Left cardiac atrium (tissue), 4 donors: ENCODE measurements at regions of chr11 and their contacts with region 1.

Region 1: DNA sequence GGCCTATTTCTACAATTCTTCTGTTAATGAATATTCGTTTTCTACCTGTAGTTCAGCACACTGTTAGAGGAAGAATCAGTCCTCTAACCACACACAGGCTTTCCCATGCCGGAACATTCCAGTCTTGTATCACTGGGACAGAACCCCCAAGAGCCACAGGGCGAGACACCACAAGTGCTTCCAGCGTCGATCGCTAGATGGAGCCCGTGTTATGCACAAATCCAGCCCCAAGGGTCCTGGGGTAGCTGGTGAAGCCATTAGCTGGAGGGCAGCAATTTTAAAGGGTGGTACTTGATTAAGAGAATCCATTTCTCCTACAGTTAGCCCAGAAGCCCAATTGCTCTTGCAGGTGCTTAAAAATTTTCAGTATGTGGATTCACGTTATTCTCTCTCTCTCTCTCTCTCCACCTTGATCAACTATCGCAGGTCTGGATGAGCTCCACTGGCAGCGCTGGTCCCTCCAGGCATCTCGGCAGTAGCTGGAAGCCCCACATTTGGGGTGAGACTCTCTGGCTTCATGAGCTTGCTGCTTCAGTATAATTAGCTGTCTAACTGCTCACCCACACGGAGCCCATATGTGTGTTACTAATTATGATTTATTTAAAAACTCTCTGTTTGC is 148.2 kb upstream of the SNX19 start:
- DNase-seq: peak; percentile 46
- ATAC-seq: peak; percentile 67 to 80

Region 2: GRCh38 chr11:130945896-130946295 is 118.6 kb before region 1 on chr11:
- intact Hi-C with region 1: no loop called
- DNase-seq: peak; percentile 71
- ATAC-seq: peak; percentile 55 to 96

Region 3: GRCh38 chr11:131217313-131218310 is 153.1 kb after region 1 on chr11:
- intact Hi-C with region 1: loop called (anchors 2 to 5 kb)
- DNase-seq: no peak
- ATAC-seq: peak in 1 of 2 donors; percentile 29

Region 4: DNA sequence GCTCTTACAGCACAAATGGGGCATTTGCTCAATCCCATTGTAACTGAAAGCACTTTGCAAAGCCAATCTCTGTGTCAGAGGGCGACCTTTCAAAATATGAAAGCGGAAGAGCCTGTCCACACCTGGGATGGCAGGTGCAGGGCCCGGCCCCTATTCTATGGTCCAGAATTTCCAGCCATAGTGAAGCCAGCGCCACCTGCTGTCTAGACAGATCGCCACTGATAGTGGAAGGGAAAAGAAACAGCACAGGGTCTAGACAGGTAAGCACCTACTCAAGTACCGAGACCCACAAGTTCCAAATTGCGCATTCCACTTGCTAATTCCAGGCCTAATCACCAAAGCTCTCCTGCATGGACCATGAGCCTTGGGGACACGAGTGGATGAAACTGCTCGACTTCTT is 447.3 kb after region 1 on chr11:
- intact Hi-C with region 1: loop called (anchors 5 to 10 kb)
- DNase-seq: no peak
- ATAC-seq: peak in 1 of 2 donors; percentile 43

Region 5: GRCh38 chr11:131668500-131669400 is 604.3 kb after region 1 on chr11:
- intact Hi-C with region 1: loop called in 1 of 2 experiments (anchors 5 kb)
- DNase-seq: peak; percentile 49
- ATAC-seq: no peak

Region 6: GRCh38 chr11:131674051-131674755 is 609.7 kb after region 1 on chr11:
- intact Hi-C with region 1: loop called (anchors 2 to 5 kb)
- DNase-seq: peak; percentile 68
- ATAC-seq: peak; percentile 84 to 93